Psoas muscle (tissue), 8 donors: ENCODE measurements at regions of chr3 and their contacts with region 1.

Region 1: GRCh38 chr3:150546226-150547044 is at the starts of genes EIF2A and SERP1:
- DNase-seq: peak; percentile 98 to 100
- ATAC-seq: peak; percentile 93 to 95 (median 94)
- H3K4me3 ChIP-seq: peak within 1 kb of the TSS; percentile 85
- H3K27ac ChIP-seq: peak within 1 kb of the TSS; percentile 97
- H3K4me1 ChIP-seq: peaks cover 39% of the 10 kb centered on the region
- H3K27me3 ChIP-seq: no peaks in the 10 kb centered on the region
- CTCF ChIP-seq: no peak
- total RNA-seq, gene EIF2A: 67.2 to 103 (median 91.2) TPM
- total RNA-seq, gene SERP1: 16.3 to 22.5 (median 18.7) TPM

Region 2: GRCh38 chr3:149812606-149813366 is 733.6 kb before region 1 on chr3 and contains the start of gene RNF13:
- intact Hi-C with region 1: loop called in 1 of 2 experiments (anchors 5 kb)
- DNase-seq: peak; percentile 98
- ATAC-seq: peak; percentile 92 to 95 (median 94)
- H3K4me3 ChIP-seq: peak within 1 kb of the TSS; percentile 95
- H3K27ac ChIP-seq: peak within 1 kb of the TSS; percentile 100
- H3K4me1 ChIP-seq: peaks cover 45% of the 10 kb centered on the region
- H3K27me3 ChIP-seq: no peaks in the 10 kb centered on the region
- CTCF ChIP-seq: no peak
- total RNA-seq, gene RNF13: 39.8 to 51.0 (median 43.9) TPM

Region 3: DNA sequence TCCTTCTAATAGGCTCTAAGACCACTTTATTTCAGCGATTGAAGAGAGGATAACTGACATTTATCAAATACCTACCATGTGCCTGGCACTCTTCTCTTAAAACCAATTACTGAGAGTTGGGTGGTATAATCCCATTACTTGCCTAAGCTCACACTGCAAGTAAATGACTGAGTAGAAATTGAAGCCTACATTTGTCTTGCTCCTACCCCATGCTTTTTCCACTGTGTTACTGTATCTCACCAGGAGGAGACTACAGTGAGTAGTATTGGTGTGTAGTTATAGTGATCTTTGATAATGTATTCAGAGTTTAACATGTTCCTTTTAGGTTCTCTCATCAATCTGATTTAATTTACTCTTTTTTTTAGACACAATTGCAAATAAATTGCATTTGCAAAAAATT is 20.9 kb after region 1 on chr3:
- intact Hi-C with region 1: no loop called
- DNase-seq: no peak
- ATAC-seq: no peak
- H3K4me3 ChIP-seq: no peak overlapping the region
- H3K27ac ChIP-seq: no peak overlapping the region
- H3K4me1 ChIP-seq: no peaks in the 10 kb centered on the region
- H3K27me3 ChIP-seq: no peaks in the 10 kb centered on the region
- CTCF ChIP-seq: no peak

Region 4: DNA sequence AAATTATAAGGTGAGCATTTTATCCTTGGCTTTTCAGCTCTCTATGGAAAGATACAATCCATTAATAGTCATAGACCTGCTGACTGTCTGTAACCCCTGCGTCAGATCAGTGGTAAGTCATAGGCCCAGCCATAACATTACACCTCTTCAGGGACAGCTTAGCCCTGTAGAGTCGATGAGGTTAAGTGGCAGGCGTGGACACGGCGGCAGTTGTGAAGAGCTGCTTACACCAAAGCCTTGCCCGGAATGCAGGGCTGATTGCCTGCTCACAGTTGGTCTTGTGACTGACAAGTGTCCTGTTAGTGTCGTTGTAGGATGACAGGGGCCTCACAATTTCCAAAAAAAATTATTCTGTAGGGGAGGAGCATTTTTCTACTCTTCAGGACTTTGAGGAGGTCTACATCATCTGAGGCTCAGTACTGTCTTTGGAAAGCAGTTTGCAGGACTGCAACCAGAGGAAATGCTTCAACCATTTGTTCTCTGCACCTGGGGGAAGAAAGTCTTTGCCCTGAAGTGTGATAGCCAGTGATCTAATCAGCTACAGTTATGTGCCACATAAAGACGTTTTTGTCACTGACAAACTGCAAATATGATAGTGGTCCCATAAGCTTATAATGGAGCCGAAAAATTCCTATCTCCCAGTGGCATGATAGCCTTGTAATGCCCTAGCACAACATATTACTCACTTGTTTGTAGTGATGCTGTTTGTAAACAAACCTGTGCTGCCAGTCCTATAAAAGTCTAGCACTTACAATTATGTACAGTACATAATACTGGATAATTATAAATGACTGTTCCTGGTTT is 41.8 kb after region 1 on chr3:
- intact Hi-C with region 1: loop called in 1 of 2 experiments (anchors 5 kb)
- DNase-seq: peak in 1 of 2 donors; percentile 57
- ATAC-seq: peak; percentile 83 to 88 (median 86)
- H3K4me3 ChIP-seq: no peak overlapping the region
- H3K27ac ChIP-seq: peak overlapping the region; percentile 17
- H3K4me1 ChIP-seq: peaks cover 5% of the 10 kb centered on the region
- H3K27me3 ChIP-seq: no peaks in the 10 kb centered on the region
- CTCF ChIP-seq: no peak

Region 5: GRCh38 chr3:150603153-150603979 is 56.9 kb after region 1 on chr3 and contains the start of gene SELENOT:
- intact Hi-C with region 1: loop called in 1 of 2 experiments (anchors 5 kb)
- DNase-seq: peak; percentile 93 to 98
- ATAC-seq: peak; percentile 92 to 96 (median 94)
- H3K4me3 ChIP-seq: peak within 1 kb of the TSS; percentile 85
- H3K27ac ChIP-seq: peak within 1 kb of the TSS; percentile 94
- H3K4me1 ChIP-seq: peaks cover 40% of the 10 kb centered on the region
- H3K27me3 ChIP-seq: no peaks in the 10 kb centered on the region
- CTCF ChIP-seq: peak; percentile 36
- total RNA-seq, gene SELENOT: 49.5 to 78.1 (median 54.8) TPM

Region 6: DNA sequence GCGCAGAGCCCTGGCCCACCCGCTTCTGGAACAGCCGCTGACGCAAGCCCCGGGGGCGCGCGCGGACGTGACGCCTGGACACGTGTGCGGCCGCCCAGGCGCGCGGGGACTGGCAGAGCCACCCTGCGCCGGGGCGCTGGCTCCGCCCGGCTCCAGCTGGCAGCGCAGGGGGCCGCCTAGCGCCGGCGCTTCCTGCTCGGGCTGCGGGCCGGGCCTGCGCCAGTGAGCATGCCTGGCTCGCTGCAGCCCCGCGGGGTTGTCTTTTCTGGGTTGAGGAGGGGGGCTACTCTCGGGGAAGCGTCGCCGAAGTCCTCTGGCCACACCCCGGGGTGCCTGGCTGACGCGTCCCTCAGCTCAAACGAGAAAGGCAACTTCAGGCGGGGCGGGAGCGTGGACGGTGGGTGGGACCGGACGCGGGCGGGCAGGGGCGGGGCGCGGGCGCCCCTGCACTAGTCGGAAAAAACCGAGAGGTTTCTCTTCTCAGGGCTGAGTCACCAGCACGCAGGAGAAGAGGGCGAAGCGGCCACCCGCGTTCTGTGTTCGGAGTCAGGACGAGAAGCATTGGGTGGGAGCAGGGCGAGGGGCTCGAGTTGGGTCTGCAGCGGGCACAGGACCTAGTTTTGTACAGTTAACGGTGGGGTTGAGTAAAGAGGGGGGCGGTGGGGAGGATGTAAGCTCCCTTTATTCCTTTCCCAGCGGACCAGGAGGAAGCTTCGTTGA is 216.8 kb after region 1 on chr3 and contains the start of gene SIAH2:
- intact Hi-C with region 1: loop called in 1 of 2 experiments (anchors 5 kb)
- DNase-seq: peak; percentile 94 to 95
- ATAC-seq: peak; percentile 90 to 95 (median 93)
- H3K4me3 ChIP-seq: peak within 1 kb of the TSS; percentile 90
- H3K27ac ChIP-seq: peak within 1 kb of the TSS; percentile 95
- H3K4me1 ChIP-seq: peaks cover 30% of the 10 kb centered on the region
- H3K27me3 ChIP-seq: no peaks in the 10 kb centered on the region
- CTCF ChIP-seq: no peak
- total RNA-seq, gene SIAH2: 10.2 to 13.6 (median 11.7) TPM

Region 7: DNA sequence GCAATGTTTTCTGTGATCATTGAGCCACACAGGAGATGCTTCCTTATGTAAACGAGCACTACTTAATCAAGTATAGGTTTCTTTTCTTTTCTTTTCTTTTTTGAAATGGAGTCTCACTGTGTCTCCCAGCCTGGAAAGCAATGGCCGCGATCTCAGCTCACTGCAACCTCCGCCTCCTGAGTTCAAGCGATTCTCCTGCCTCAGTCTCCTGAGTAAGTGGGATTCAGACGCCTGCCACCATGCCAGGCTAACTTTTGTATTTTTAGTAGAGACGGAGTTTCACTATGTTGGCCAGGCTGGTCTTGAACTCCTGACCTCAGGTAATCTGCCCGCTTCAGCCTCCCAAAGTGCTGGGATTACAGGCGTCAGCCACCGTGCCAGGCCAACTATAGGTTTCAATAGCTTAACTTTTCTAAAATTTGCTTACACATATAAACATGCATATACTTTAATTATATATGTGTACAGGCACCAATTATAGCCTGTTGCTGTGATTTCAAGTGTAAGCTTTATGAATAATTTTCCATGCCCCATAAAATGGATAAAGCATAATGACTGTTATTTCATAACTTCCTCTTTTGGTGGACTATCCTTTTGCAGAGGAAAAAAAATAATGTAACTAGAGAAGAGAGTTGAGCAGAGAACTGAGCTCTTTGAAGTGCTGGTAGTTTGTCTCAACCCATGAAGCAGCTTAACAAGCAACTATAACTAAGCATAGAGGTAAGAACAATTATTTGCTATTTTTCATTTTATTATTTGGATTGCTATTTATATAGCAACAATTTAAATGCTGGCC is 1697.5 kb after region 1 on chr3:
- intact Hi-C with region 1: no loop called
- DNase-seq: no peak
- ATAC-seq: no peak
- H3K4me3 ChIP-seq: peak overlapping the region; percentile 8
- H3K27ac ChIP-seq: no peak overlapping the region
- H3K4me1 ChIP-seq: peaks cover 21% of the 10 kb centered on the region
- H3K27me3 ChIP-seq: no peaks in the 10 kb centered on the region
- CTCF ChIP-seq: no peak